Brain microvascular endothelial cell (primary cell): ENCODE measurements at regions of chr17 and their contacts with region 1.

Region 1: DNA sequence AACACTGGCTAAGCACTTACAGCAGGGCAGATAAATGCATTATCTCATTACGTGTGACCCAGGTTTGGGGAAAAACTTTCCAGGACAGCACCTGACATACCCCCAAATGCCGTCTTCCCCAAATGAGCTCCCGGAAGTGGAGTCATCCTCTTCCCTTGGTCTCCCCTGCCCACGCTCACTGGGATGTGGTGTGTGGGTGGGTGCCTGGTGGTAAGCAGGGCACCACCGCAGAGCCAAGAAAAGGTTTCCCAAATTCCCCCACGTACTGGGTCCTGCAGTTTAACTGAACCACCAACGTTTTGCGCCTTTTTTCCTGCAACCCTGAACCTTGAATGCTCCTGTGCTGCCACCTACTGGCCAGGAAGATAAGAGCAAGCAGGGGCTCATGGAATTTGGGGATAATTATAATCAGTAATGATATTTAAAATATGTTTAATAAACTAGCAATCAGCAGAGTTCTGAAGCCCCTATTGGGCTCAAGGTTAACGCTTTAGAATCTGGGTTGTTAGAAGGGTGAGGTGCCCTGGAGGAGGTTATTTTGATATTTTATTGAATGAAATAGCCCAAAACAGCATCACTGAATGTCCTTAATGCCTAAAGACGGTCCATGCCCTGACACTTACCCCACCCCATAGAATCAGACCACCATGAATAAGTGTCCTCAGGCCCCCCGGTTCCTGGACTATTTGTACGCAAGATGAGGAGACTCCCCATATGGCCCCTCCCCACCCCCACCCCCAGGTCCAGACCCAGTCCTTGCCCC is 8.0 kb downstream of the SPPL2C start:
- DNase-seq: peak; percentile 47
- H3K4me3 ChIP-seq: no peak overlapping the region
- H3K27ac ChIP-seq: no peak overlapping the region
- H3K27me3 ChIP-seq: no peaks in the 10 kb centered on the region
- CTCF ChIP-seq: peak; percentile 95

Region 2: GRCh38 chr17:45666046-45666600 is 186.6 kb before region 1 on chr17:
- in situ Hi-C with region 1: loop called (anchors 25 kb)
- DNase-seq: no peak
- H3K4me3 ChIP-seq: no peak overlapping the region
- H3K27ac ChIP-seq: no peak overlapping the region
- H3K27me3 ChIP-seq: no peaks in the 10 kb centered on the region
- CTCF ChIP-seq: peak; percentile 15

Region 3: GRCh38 chr17:45702666-45703266 is 149.9 kb before region 1 on chr17:
- in situ Hi-C with region 1: no loop called
- DNase-seq: no peak
- H3K4me3 ChIP-seq: no peak overlapping the region
- H3K27ac ChIP-seq: no peak overlapping the region
- H3K27me3 ChIP-seq: no peaks in the 10 kb centered on the region
- CTCF ChIP-seq: no peak

Region 4: DNA sequence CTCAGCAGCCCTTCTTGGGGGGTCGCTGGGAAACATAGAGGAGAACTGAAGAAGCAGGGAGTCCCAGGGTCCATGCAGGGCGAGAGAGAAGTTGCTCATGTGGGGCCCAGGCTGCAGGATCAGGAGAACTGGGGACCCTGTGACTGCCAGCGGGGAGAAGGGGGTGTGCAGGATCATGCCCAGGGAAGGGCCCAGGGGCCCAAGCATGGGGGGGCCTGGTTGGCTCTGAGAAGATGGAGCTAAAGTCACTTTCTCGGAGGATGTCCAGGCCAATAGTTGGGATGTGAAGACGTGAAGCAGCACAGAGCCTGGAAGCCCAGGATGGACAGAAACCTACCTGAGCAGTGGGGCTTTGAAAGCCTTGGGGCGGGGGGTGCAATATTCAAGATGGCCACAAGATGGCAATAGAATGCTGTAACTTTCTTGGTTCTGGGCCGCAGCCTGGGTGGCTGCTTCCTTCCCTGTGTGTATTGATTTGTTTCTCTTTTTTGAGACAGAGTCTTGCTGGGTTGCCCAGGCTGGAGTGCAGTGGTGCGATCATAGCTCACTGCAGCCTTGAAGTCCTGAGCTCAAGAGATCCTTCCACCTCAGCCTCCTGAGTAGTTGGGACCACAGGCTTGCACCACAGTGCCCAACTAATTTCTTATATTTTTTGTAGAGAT is 149.7 kb after region 1 on chr17:
- in situ Hi-C with region 1: no loop called
- DNase-seq: peak; percentile 59
- H3K4me3 ChIP-seq: no peak overlapping the region
- H3K27ac ChIP-seq: no peak overlapping the region
- H3K27me3 ChIP-seq: no peaks in the 10 kb centered on the region
- CTCF ChIP-seq: peak; percentile 85